Activated CD4-positive, alpha-beta T cell treated with anti-CD3 and anti-CD28 coated beads, Interleukin-2, amount 10 ng/mL, durations not matched to agents 24 days and 14 days (primary cell): ENCODE measurements at regions of chrX and their contacts with region 1.

Region 1: DNA sequence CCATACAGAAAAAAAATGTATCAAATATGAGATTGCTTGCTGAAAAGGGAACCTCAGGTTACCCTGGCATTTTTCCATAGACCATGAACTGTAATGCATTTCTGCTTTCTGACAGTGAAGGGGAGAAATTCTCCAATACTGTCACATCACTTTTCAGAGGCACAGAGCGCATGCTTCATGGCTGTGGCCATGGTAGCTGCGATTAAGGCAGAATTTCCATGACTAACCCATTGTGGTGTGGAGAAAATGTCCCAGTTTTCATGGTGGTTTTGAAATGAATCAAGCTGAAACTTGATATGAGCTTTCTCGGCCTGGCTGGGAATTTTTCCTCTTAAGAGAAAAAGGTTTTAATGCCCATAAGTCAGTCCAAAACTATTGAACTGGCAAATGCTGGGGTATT is 39.5 kb upstream of the MAP3K15 start:
- DNase-seq: peak; percentile 64
- H3K4me3 Mint-ChIP-seq: peak overlapping the region; percentile 53
- H3K27ac Mint-ChIP-seq: peak overlapping the region; percentile 90
- H3K4me1 Mint-ChIP-seq: peaks cover 35% of the 10 kb centered on the region
- H3K27me3 Mint-ChIP-seq: no peaks in the 10 kb centered on the region

Region 2: GRCh38 chrX:19566359-19567222 is 11.8 kb after region 1 on chrX:
- intact Hi-C with region 1: loop called (anchors 1 kb)
- DNase-seq: peak; percentile 63
- H3K4me3 Mint-ChIP-seq: peak overlapping the region; percentile 44
- H3K27ac Mint-ChIP-seq: peak overlapping the region; percentile 91
- H3K4me1 Mint-ChIP-seq: peaks cover 35% of the 10 kb centered on the region
- H3K27me3 Mint-ChIP-seq: no peaks in the 10 kb centered on the region

Region 3: GRCh38 chrX:19625612-19626011 is 70.8 kb after region 1 on chrX:
- intact Hi-C with region 1: loop called (anchors 1 kb)
- DNase-seq: peak; percentile 82
- H3K4me3 Mint-ChIP-seq: peak overlapping the region; percentile 64
- H3K27ac Mint-ChIP-seq: peak overlapping the region; percentile 85
- H3K4me1 Mint-ChIP-seq: peaks cover 48% of the 10 kb centered on the region
- H3K27me3 Mint-ChIP-seq: no peaks in the 10 kb centered on the region

Region 4: GRCh38 chrX:19747652-19748610 is 193.1 kb after region 1 on chrX:
- intact Hi-C with region 1: loop called (anchors 5 kb)
- DNase-seq: peak; percentile 92
- H3K4me3 Mint-ChIP-seq: peak overlapping the region; percentile 68
- H3K27ac Mint-ChIP-seq: peak overlapping the region; percentile 97
- H3K4me1 Mint-ChIP-seq: peaks cover 72% of the 10 kb centered on the region
- H3K27me3 Mint-ChIP-seq: no peaks in the 10 kb centered on the region

Region 5: DNA sequence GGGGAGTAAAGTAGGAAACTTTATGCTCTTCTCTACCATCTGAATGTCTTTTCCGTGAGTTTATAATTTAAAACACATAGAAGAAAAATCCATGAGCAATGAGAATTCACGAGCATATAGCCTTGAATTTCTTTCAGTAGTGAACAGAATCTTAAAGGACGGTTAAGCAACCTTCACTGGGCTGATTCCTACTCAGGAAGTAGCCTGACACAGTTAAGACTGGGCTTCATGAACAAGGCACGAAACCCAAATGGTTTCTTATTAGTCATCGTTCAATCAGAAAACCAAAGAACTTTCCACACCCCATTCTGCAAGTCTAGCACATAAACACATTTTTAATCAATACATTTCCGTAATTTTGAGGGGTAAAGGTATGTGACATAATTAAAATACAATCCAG is 236.8 kb after region 1 on chrX:
- intact Hi-C with region 1: loop called (anchors 5 kb)
- DNase-seq: peak; percentile 68
- H3K4me3 Mint-ChIP-seq: peak overlapping the region; percentile 62
- H3K27ac Mint-ChIP-seq: peak overlapping the region; percentile 88
- H3K4me1 Mint-ChIP-seq: peaks cover 36% of the 10 kb centered on the region
- H3K27me3 Mint-ChIP-seq: no peaks in the 10 kb centered on the region